PC-9 (cell line): ENCODE measurements at regions of chrX and their contacts with region 1.

Region 1: GRCh38 chrX:103214870-103215424 is at the start of gene BEX4:
- DNase-seq: peak in 1 of 2 experiments; percentile 49
- H3K4me3 ChIP-seq: no peak within 1 kb of the TSS
- H3K27ac ChIP-seq: no peak within 1 kb of the TSS
- H3K4me1 ChIP-seq: no peaks in the 10 kb centered on the region
- H3K27me3 ChIP-seq: no peaks in the 10 kb centered on the region
- CTCF ChIP-seq: no peak
- total RNA-seq, gene BEX4: 1.0 and 1.1 TPM in 2 replicates

Region 2: DNA sequence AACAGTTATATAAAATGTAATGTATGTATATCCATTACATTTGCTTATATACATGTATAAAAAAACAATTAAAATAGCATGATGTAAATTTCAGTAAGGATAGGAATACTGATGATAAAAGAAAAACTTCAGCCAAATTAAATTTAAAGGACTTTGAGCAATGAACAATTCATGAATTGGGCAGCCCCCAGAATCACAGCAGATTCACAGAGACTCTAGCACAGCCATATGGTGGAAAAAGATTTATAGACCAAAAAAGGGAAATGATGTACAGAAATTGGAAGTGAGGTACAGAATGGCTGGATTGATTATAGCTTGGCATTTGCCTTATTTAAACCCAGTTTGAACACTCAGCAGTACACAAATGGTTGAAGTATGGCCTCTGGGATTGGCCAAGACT is 312.6 kb before region 1 on chrX:
- CTCF ChIA-PET with region 1: no interaction called
- POLR2A ChIA-PET with region 1: no interaction called
- intact Hi-C with region 1: no loop called
- DNase-seq: no peak
- H3K4me3 ChIP-seq: no peak overlapping the region
- H3K27ac ChIP-seq: no peak overlapping the region
- H3K4me1 ChIP-seq: no peaks in the 10 kb centered on the region
- H3K27me3 ChIP-seq: no peaks in the 10 kb centered on the region
- CTCF ChIP-seq: no peak

Region 3: GRCh38 chrX:103248553-103248952 is 33.6 kb after region 1 on chrX:
- CTCF ChIA-PET with region 1: no interaction called
- POLR2A ChIA-PET with region 1: no interaction called
- intact Hi-C with region 1: loop called (anchors 1 kb)
- DNase-seq: no peak
- H3K4me3 ChIP-seq: no peak overlapping the region
- H3K27ac ChIP-seq: no peak overlapping the region
- H3K4me1 ChIP-seq: no peaks in the 10 kb centered on the region
- H3K27me3 ChIP-seq: no peaks in the 10 kb centered on the region
- CTCF ChIP-seq: peak; percentile 57; the same call in 1 of the 2 replicates

Region 4: GRCh38 chrX:103343105-103343504 is 128.2 kb after region 1 on chrX:
- CTCF ChIA-PET with region 1: no interaction called
- POLR2A ChIA-PET with region 1: no interaction called
- intact Hi-C with region 1: loop called (anchors 10 kb)
- DNase-seq: peak; percentile 31 to 37
- H3K4me3 ChIP-seq: no peak overlapping the region
- H3K27ac ChIP-seq: no peak overlapping the region
- H3K4me1 ChIP-seq: no peaks in the 10 kb centered on the region
- H3K27me3 ChIP-seq: no peaks in the 10 kb centered on the region
- CTCF ChIP-seq: peak; percentile 79

Region 5: DNA sequence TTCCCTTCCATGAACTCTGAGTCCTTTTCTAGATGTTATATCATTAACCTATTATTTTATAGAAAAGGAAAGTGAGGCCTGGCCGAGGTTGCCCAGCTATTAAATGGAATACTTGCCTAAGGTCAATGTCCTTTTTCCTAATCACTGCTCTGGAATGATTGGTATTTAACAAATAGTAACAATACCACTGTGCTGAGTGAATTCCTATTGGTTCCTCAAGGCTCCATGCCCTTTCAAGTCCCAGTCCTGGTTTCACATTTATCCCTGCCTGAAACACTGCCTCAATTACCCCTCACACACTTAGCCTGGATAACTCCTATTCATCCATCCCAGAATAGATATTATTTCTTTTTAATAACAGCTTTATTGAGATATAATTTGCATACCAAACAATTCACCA is 147.6 kb after region 1 on chrX:
- CTCF ChIA-PET with region 1: no interaction called
- POLR2A ChIA-PET with region 1: no interaction called
- intact Hi-C with region 1: no loop called
- DNase-seq: peak in 1 of 2 experiments; percentile 53
- H3K4me3 ChIP-seq: no peak overlapping the region
- H3K27ac ChIP-seq: no peak overlapping the region
- H3K4me1 ChIP-seq: peaks cover 18% of the 10 kb centered on the region
- H3K27me3 ChIP-seq: no peaks in the 10 kb centered on the region
- CTCF ChIP-seq: no peak

Region 6: DNA sequence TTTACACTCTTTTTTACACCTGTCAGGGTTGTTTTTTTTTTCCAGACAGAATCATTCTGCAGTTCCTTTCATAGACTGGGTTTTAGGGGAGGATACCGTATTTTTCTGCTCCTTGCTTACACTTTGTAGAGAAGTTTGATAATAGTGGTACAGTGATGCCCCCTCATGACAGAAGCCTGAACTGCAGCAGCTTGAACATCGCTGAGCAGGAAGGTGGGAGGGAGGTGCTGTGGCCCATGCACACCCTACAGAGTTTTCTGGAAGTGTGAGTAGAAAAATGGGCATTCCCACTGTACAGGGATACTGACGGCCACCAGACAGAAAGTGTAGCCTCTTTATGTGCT is 249.8 kb after region 1 on chrX:
- CTCF ChIA-PET with region 1: no interaction called
- POLR2A ChIA-PET with region 1: no interaction called
- intact Hi-C with region 1: loop called (anchors 1 kb)
- DNase-seq: peak in 1 of 2 experiments; percentile 61
- H3K4me3 ChIP-seq: no peak overlapping the region
- H3K27ac ChIP-seq: no peak overlapping the region
- H3K4me1 ChIP-seq: no peaks in the 10 kb centered on the region
- H3K27me3 ChIP-seq: no peaks in the 10 kb centered on the region
- CTCF ChIP-seq: peak; percentile 81